CD4-positive, alpha-beta memory T cell (primary cell): ENCODE measurements at regions of chr2 and their contacts with region 1.

Region 1: DNA sequence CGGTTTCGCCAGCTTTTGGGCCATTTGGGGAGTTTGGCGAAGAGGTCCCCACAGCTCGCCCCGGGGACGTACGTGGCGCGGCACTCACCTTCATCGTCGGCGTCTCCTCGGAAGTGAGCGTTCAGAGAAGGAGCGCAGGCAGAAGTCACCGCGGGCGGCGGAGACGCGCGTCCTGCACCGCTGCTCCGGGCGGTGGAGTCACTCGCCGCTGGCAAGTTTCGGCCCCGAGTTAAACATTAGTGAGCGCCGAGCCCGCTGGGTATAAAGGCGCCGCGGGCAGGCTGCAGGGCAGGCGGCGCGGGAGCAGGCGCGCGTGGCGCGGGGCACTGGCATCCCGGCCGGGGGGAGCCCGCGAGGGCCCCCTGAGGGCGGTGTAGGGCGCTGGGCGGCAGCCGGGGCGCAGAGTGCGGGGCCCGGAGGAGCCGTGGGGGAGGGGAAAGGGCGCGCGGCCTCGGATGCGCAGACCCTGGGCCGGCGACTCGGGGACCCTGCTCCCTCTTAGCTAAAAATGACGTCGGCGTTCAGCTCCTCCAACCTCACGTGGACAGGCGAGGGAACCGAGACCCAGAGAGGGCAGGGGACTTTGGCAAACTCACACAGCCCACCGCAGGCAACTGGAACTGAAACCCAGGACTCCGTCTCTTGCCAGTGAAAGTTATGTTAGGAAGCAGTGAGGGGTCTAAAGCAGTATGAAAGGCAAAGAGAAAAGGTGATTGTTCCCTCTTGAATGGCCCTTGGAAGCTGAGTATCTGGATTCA is at the start of gene DPP4:
- DNase-seq: peak; percentile 52 to 64 (median 58)
- H3K4me3 ChIP-seq: peak within 1 kb of the TSS; percentile 68 to 76
- H3K4me3 Mint-ChIP-seq: peak within 1 kb of the TSS; percentile 95 to 100 (median 98)
- H3K27ac ChIP-seq: peak within 1 kb of the TSS; percentile 78
- H3K27ac Mint-ChIP-seq: peak within 1 kb of the TSS; percentile 86 to 98 (median 94)
- H3K4me1 ChIP-seq: peaks cover 45% of the 10 kb centered on the region
- H3K4me1 Mint-ChIP-seq: peaks cover 39 to 62% (median 48%) of the 10 kb centered on the region in 4 donors
- H3K27me3 ChIP-seq: no peaks in the 10 kb centered on the region
- H3K27me3 Mint-ChIP-seq: no peaks in the 10 kb centered on the region
- total RNA-seq, gene DPP4: 38.5 to 40.2 TPM

Region 2: DNA sequence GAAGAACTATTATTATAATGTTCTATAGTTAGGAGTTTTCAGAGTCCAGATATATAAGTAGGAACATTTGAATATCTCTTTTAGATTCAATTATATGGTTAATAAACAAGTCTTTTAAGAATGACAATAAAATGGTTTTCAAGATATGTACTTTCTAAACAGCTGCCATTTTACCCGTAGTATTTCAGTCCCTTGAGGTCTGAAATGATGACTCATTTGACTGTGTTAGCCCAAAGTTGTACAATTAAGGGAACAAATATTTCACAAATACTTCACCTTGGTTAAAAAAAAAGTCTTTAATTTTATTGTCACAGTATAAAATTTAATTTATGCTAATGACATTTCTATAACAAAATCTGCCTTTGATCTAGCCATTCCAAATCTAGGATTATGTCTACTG is 1005.4 kb before region 1 on chr2:
- CTCF ChIA-PET with region 1: no interaction called
- POLR2A ChIA-PET with region 1: no interaction called
- intact Hi-C with region 1: no loop called
- DNase-seq: no peak
- H3K4me3 ChIP-seq: no peak overlapping the region
- H3K4me3 Mint-ChIP-seq: no peak overlapping the region
- H3K27ac ChIP-seq: no peak overlapping the region
- H3K27ac Mint-ChIP-seq: no peak overlapping the region
- H3K4me1 ChIP-seq: no peaks in the 10 kb centered on the region
- H3K4me1 Mint-ChIP-seq: peaks cover 1 to 8% (median 2%) of the 10 kb centered on the region in 4 donors
- H3K27me3 ChIP-seq: no peaks in the 10 kb centered on the region
- H3K27me3 Mint-ChIP-seq: no peaks in the 10 kb centered on the region

Region 3: GRCh38 chr2:161992526-161992925 is 81.5 kb before region 1 on chr2:
- CTCF ChIA-PET with region 1: interaction called, 8 read pairs
- POLR2A ChIA-PET with region 1: interaction called, 14 read pairs
- intact Hi-C with region 1: no loop called
- DNase-seq: peak; percentile 46 to 62 (median 57)
- H3K4me3 ChIP-seq: peak overlapping the region; percentile 20 to 36
- H3K4me3 Mint-ChIP-seq: peak overlapping the region; percentile 70 to 94 (median 84)
- H3K27ac ChIP-seq: peak overlapping the region; percentile 65
- H3K27ac Mint-ChIP-seq: peak overlapping the region; percentile 95 to 99 (median 98)
- H3K4me1 ChIP-seq: peaks cover 56% of the 10 kb centered on the region
- H3K4me1 Mint-ChIP-seq: peaks cover 41 to 72% (median 50%) of the 10 kb centered on the region in 4 donors
- H3K27me3 ChIP-seq: no peaks in the 10 kb centered on the region
- H3K27me3 Mint-ChIP-seq: no peaks in the 10 kb centered on the region

Region 4: GRCh38 chr2:162007447-162008040 is 66.5 kb before region 1 on chr2:
- CTCF ChIA-PET with region 1: interaction called, 20 read pairs
- POLR2A ChIA-PET with region 1: interaction called, 75 read pairs
- intact Hi-C with region 1: loop called (anchors 1 kb)
- DNase-seq: peak in 4 of 5 donors; percentile 36 to 46 (median 40)
- H3K4me3 ChIP-seq: no peak overlapping the region
- H3K4me3 Mint-ChIP-seq: no peak overlapping the region
- H3K27ac ChIP-seq: no peak overlapping the region
- H3K27ac Mint-ChIP-seq: peak overlapping the region in 6 of 7 donors; percentile 4 to 33 (median 21)
- H3K4me1 ChIP-seq: peaks cover 40% of the 10 kb centered on the region
- H3K4me1 Mint-ChIP-seq: peaks cover 36 to 55% (median 44%) of the 10 kb centered on the region in 4 donors
- H3K27me3 ChIP-seq: no peaks in the 10 kb centered on the region
- H3K27me3 Mint-ChIP-seq: no peaks in the 10 kb centered on the region

Region 5: GRCh38 chr2:162025121-162026031 is 48.7 kb before region 1 on chr2:
- CTCF ChIA-PET with region 1: interaction called, 6 read pairs
- POLR2A ChIA-PET with region 1: interaction called, 10 read pairs
- intact Hi-C with region 1: no loop called
- DNase-seq: no peak
- H3K4me3 ChIP-seq: no peak overlapping the region
- H3K4me3 Mint-ChIP-seq: peak overlapping the region in 3 of 8 donors; percentile 3 to 23 (median 17)
- H3K27ac ChIP-seq: no peak overlapping the region
- H3K27ac Mint-ChIP-seq: peak overlapping the region in 5 of 7 donors; percentile 53 to 89 (median 81)
- H3K4me1 ChIP-seq: peaks cover 13% of the 10 kb centered on the region
- H3K4me1 Mint-ChIP-seq: peaks cover 22 to 40% (median 33%) of the 10 kb centered on the region in 4 donors
- H3K27me3 ChIP-seq: no peaks in the 10 kb centered on the region
- H3K27me3 Mint-ChIP-seq: no peaks in the 10 kb centered on the region

Region 6: DNA sequence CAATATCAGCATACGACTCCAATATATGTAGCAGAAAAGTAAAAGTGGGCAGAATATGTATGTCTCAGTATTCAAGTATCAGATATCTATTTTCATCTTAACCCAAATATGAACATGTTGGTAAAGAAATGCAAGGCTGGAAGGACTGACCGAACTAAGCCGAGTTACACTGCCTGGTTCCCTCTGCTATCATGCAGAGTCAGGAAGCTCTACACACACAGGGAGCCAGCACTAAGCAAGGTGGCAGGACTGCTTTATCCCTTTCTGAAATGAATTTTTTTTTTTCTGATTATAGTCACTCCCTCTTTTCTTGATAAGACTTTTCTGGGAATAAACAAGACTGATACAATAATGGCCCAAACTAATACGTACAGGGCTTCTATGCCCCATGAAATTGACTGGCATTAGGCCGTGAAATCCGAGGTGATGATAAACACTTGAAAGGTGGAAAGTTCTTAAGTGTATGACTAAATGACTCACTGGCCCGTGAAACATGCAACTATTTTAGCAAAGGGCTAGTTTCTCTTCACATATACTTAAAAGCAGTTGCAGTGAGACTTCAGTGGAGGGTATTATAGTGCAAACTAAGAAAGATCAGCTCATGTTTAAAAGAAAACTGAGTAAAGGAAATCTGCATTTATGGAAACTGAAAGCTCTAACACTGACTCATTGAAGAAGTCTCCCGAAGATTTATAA is 14.9 kb before region 1 on chr2:
- CTCF ChIA-PET with region 1: interaction called, 60 read pairs
- POLR2A ChIA-PET with region 1: interaction called, 114 read pairs
- intact Hi-C with region 1: loop called (anchors 1 kb)
- DNase-seq: peak in 2 of 5 donors; percentile 16 to 47
- H3K4me3 ChIP-seq: peak overlapping the region in 1 of 2 donors; percentile 4
- H3K4me3 Mint-ChIP-seq: peak overlapping the region; percentile 75 to 91 (median 84)
- H3K27ac ChIP-seq: peak overlapping the region; percentile 41
- H3K27ac Mint-ChIP-seq: peak overlapping the region; percentile 82 to 94 (median 91)
- H3K4me1 ChIP-seq: peaks cover 84% of the 10 kb centered on the region
- H3K4me1 Mint-ChIP-seq: peaks cover 68 to 91% (median 80%) of the 10 kb centered on the region in 4 donors
- H3K27me3 ChIP-seq: no peaks in the 10 kb centered on the region
- H3K27me3 Mint-ChIP-seq: no peaks in the 10 kb centered on the region